GM18951 (cell line): ENCODE measurements at regions of chr5 and their contacts with region 1.

Region 1: GRCh38 chr5:96729156-96729555 is 67.0 kb downstream of the CAST start:
- POLR2A ChIP-seq: no peak

Region 2: DNA sequence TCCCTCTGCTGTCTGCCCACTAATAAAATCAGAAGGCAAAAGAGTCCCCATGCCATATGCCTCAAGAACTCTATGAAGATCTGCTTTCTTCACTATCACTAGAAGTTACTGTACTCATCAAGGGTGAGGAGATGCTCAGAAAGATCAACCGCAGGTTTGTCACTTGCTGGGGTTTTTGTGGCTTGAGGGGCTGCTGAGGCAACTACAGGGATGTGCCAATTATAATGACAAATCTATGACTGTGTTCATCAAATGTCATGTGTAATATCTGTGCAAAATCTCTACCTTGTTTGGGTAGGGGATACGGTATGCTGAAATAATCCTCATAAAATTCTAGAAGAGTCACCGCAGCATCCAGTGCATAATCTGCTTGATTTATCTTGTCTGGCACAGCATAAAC is 65.6 kb after region 1 on chr5:
- in situ Hi-C with region 1: no loop called
- POLR2A ChIP-seq: no peak

Region 3: DNA sequence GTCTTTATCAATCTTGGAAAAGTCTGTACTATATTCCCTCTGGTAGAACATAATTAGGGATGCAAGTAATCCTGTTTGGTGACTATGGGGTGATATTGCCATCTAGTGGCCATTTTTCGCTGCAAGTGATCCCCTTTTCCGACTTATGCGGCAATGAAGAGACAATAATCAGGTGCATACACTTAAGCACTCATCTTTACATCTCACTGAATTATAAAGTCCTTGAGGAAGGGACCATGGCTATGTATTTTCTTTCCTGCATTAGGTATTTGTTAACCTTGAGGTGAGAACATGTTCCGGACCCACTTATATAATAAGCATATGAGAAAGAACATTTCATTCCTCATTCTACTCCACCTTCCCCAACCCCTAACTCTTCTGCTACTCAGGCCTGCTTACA is 432.9 kb after region 1 on chr5:
- in situ Hi-C with region 1: loop called (anchors 25 kb)
- POLR2A ChIP-seq: no peak